ENCODE measurements at regions of chr17 and their contacts with region 1.

Region 1: GRCh38 chr17:81222906-81223761 is at the start of gene CEP131:
- DNase-seq: peak; percentile 100
- H3K4me3 Mint-ChIP-seq: peak within 1 kb of the TSS; percentile 85
- H3K27ac Mint-ChIP-seq: peak within 1 kb of the TSS; percentile 92
- H3K4me1 Mint-ChIP-seq: peaks cover 16% of the 10 kb centered on the region
- H3K27me3 Mint-ChIP-seq: peaks cover 2% of the 10 kb centered on the region
- total RNA-seq, gene CEP131: 15.6 and 18.0 TPM in 2 replicates

Region 2: DNA sequence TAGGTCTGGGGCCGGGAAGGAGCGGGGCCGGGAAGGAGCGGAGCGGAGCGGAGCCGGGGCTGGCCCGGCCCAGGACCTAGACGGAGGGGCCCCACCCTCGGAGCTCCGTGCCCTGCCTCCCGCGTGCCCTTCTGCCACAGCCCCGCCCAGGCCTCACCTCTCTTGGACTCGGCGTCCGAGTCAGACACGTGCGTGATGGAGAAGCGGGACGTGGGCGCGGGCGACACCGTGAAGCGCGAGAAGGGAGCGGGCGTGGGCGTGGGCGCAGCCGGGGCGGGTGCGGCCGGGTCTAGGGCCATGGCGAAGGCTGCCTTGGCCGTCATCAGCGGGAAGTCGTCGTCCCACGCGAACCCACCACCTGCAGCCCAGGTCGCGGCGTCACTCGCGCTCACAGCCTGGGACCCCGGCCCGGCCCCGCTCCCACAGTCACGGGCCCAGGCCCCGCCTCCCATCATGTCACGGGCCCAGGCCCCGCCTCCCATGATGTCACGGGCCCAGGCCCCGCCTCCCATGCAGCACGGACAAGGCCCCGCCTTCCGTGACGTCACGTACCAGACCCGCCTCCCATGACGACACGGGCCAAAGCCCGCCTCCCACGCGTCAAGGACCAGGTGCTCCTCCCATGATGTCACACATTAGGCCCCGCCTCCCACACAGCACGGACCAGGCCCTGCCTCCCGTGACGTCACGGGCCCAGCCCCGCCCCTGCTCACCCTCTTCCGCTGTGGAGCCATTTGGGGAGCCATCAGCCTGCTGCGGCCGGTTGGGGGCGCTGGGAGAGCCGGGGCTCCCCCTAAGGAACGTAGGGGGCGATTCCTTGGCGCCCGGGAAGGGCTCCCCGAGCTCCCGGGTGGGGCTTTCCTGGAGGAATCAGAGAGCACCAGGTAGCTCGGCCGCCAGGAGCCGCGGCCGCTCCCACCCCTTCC is 103.6 kb before region 1 on chr17:
- intact Hi-C with region 1: loop called (anchors 1 kb)
- DNase-seq: peak; percentile 97
- H3K4me3 Mint-ChIP-seq: peak overlapping the region; percentile 77
- H3K27ac Mint-ChIP-seq: peak overlapping the region; percentile 78
- H3K4me1 Mint-ChIP-seq: peaks cover 4% of the 10 kb centered on the region
- H3K27me3 Mint-ChIP-seq: peaks cover 2% of the 10 kb centered on the region

Region 3: DNA sequence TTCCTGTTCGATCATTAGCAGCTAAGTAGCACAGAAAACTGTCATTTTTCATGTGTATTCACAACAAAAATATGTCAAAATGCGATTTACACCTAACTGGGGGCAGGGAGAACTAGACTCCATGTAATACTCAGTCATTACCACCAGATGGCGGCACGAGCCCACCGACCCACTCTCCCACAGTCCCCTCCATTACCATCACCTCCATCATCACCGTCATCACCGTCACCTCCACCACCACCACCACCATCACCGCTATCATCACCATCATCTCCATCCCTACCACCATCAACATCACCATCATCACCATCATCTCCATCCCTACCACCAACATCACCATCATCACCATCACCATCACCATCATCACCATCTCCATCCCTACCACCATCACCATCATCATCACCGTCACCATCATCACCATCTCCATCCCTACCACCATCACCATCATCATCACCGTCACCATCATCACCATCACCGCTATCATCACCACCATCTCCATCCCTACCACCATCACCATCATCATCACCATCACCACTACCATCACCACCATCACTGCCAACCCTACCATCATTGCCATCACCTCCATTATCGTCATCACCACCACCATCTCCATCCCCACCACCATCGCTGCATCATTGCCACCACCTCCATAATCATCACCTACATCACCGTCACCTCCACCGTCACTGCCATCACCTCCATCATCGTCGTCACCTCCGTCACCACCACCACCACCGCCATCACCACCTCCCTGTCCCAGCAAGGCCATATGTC is 30.4 kb after region 1 on chr17:
- intact Hi-C with region 1: no loop called
- DNase-seq: peak; percentile 86
- H3K4me3 Mint-ChIP-seq: no peak overlapping the region
- H3K27ac Mint-ChIP-seq: peak overlapping the region; percentile 3
- H3K4me1 Mint-ChIP-seq: peaks cover 10% of the 10 kb centered on the region
- H3K27me3 Mint-ChIP-seq: no peaks in the 10 kb centered on the region

Region 4: DNA sequence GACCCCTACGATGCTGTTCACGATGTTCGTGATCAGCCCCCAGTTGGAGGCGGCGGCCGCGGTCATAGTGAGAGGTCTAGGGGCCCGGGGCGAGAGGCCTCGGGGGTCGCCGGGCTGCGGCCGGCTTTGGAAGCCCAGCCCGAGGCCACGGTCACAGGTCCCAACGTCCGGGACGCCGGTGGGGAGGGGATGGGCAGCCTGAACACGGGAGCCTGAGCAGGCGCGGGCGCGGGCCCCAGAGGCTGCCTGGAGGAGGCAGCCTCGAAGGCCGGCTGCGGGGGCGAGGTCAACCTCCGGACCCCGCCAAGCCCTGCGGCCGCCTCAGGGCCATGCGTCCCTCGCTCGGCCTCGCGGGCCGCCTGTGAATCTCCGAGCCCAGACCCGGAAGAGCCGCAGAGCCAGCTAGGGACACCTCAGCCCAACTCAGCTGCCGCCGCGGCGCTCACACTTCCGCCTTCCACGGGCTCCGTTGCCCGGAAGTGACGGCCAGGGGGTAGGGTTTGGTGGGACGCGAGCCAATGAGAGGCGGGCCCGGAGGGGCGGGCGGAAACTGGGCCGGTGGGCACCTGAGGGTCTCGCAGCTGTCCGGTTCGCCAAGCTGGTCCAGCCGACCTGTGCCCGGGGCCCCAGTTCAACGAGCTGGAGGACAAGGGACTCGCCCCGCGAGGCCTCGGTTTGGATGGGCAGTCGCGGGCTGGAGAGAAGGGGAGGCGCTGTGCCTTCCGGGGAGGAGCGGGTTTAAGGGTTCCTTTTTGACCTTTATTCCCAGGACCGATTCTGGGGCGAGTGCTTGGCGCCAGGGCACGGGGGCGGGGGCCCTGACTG is 71.9 kb after region 1 on chr17 and contains the start of gene SLC38A10:
- intact Hi-C with region 1: loop called (anchors 1 kb)
- DNase-seq: peak; percentile 99
- H3K4me3 Mint-ChIP-seq: peak within 1 kb of the TSS; percentile 98
- H3K27ac Mint-ChIP-seq: peak within 1 kb of the TSS; percentile 96
- H3K4me1 Mint-ChIP-seq: peaks cover 27% of the 10 kb centered on the region
- H3K27me3 Mint-ChIP-seq: no peaks in the 10 kb centered on the region
- total RNA-seq, gene SLC38A10: 98.0 and 105 TPM in 2 replicates